Posterior vena cava (tissue), 2 donors: ENCODE measurements at regions of chr15 and their contacts with region 1.

Region 1: GRCh38 chr15:58484791-58485600 is 53.2 kb downstream of the LIPC start:
- DNase-seq: no peak

Region 2: DNA sequence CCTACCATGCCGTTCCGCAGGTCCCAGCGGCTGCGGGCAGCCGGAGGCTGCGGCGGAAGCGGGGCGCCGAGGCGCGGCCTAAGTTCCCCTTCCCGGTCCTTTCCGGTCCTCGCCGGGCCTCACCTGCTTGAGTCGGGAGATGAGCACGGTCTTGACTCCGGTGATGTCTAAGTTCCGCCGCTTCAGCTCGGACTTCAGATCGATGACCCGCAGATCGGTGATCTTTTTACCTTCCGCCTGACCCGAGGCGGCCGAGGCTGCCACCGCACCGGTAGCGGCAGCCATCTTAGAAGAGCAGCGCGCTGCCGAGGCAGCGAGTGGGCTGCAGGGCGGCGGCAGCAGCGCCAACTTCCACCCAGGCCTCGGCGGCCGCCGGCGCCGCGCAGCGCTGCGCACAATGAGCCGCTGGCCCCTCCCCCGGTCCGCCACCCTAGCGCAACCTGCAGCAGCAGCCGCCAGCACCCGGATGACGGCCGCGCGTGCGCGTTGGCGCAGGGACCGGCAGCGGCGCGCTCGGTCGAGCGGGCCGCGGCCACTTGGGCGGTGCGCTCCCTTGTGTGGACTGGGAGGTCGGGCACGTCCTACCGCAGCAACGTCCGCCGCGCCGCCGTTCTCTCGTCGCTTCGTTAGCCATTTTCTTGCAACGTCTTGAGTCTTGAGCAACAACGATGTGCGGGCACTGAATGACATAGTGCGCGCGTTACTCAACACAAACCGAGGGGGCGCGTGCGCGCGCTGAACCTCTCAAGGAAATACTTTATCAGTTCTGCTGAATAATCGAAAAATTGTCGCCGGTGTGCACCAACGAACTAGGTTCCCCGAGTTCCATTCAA is 448.5 kb after region 1 on chr15 and contains the start of gene SLTM:
- intact Hi-C with region 1: no loop called
- DNase-seq: peak; percentile 98
- total RNA-seq, gene SLTM: 71.1 to 71.6 TPM

Region 3: DNA sequence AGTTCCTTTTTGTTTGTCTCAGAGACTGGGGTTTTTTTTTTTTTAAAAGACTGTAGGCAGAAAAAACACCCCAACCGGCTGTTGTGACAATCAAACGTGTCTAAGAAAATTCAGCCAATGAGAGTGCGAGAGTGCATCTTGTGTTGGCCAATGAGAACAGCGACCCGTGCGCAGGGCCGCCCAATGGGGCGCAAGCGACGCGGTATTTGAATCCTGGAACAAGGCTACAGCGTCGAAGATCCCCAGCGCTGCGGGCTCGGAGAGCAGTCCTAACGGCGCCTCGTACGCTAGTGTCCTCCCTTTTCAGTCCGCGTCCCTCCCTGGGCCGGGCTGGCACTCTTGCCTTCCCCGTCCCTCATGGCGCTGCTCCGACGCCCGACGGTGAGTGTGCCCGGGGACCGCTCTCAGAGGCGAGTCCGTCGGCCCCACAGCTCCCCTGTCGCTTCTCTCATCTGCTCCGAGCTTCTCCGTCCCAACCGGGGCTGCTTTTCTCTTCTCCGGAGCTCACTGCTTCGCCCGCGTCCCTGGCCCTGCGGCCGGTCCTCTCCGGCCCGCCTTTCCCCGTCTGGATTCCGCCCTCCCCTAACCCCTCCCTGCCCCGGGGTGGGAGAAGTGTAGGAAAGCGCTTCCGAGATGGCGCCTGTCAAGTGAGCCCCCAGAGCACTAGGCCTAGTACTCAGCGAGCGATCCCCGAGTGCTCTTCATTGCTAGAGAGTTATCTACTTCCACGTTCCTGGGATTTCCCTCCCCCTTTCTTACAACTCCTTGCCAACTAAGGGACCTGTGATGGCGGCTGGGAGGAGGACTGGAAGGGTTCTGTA is 620.1 kb after region 1 on chr15 and contains the start of gene CCNB2:
- intact Hi-C with region 1: loop called in 1 of 2 experiments (anchors 10 kb)
- DNase-seq: peak; percentile 96
- total RNA-seq, gene CCNB2: 0.24 to 0.69 TPM